ENCODE measurements at regions of chr1 and their contacts with region 1.

Region 1: GRCh38 chr1:205335643-205336091 is 14.1 kb upstream of the NUAK2 start:
- DNase-seq: no peak
- H3K4me3 ChIP-seq: no peak overlapping the region
- H3K27ac ChIP-seq: no peak overlapping the region
- H3K27me3 ChIP-seq: peaks cover 41% of the 10 kb centered on the region
- CTCF ChIP-seq: peak; percentile 98

Region 2: DNA sequence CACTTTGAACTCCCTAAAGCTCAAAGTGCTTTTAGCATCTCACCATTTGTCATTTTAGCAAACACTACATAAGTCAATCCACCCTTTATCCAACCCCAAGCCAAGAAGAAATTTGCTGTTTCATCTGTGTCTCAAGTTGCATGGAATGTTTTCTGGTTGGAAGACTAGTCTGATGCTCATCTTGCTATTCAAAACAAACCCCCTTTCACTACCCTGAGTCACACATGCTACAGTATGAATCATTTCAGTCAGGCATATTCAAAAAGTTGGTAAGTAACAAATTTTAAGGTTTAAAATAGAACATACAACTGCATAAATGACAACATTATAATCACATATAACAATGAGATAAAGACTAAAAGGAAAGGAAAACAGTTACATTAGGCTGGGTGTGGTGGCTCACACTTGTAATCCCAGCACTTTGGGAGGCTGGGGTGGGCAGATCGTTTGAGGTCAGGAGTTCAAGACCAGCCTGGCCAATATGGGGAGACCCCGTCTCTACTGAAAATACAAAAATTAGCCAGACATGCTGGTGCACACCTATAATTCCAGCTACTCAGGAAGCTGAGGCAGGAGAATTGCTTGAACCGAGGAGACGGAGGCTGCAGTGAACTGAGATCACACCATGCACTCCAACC is 162.8 kb before region 1 on chr1:
- CTCF ChIA-PET with region 1: no interaction called
- POLR2A ChIA-PET with region 1: no interaction called
- DNase-seq: peak; percentile 89
- H3K4me3 ChIP-seq: no peak overlapping the region
- H3K27ac ChIP-seq: peak overlapping the region; percentile 79
- H3K27me3 ChIP-seq: no peaks in the 10 kb centered on the region
- CTCF ChIP-seq: no peak

Region 3: DNA sequence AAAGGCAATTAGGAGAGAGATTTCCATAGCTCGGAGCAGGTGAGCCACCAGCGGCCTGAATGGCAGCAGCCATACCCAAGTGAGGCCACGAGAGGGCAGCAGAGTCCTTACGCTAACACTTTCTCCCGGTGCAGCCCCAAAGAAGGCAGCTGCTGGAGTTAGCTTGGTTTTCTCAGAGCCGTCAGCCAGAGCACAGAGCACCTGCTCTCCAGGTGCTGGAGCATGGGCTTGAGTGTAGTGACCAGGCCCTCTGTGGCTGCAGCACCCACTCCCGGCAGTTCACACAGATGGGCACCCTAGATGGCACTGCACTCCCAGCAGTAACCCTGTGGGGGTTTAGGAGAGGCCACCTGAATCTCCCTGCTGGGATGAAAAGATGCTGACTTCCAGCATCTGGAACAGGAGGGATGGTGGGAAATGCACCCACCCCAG is 62.1 kb before region 1 on chr1:
- CTCF ChIA-PET with region 1: interaction called, 35 read pairs
- POLR2A ChIA-PET with region 1: no interaction called
- DNase-seq: no peak
- H3K4me3 ChIP-seq: no peak overlapping the region
- H3K27ac ChIP-seq: no peak overlapping the region
- H3K27me3 ChIP-seq: no peaks in the 10 kb centered on the region
- CTCF ChIP-seq: peak; percentile 97

Region 4: DNA sequence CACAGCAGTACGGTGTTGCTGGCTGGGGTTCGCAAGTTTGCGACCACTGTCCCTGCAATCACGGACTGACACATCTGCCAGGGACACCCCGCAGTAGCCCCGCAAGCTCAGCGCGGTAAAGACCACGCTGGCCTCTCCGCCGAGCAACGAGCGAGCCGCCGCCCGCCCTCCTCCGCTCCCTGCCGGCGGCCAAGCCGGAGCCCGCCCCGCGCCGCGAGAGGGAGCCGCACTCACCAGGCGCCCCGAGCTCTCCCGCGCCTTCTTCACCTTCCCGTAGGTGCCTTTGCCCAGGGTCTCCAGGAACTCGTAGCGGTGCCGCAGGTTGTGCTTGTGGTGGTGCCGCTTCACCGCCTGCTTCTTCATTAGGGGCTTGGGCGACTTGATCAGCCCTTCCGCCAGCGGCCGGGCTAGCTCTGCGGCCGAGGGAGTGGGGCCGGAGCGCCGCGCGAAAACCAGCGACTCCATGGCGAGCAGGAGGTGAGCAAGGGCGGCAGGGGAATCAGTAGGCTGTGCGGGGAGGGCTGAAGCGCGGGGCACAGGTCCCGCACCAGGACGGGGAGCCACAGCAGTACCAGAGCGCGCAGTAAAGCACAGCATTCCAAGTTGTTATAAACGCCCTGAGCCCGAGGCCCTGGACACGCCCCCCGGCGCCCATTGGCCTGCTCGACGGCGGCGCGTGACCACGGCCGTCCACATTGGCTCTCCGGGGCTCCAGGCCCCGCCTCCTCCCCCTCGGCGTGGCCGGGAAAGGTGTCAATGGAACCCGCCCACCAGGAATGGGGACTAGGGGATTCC is 14.3 kb before region 1 on chr1 and contains the start of gene NUAK2:
- CTCF ChIA-PET with region 1: interaction called, 59 read pairs
- POLR2A ChIA-PET with region 1: no interaction called
- DNase-seq: peak; percentile 61
- H3K4me3 ChIP-seq: peak within 1 kb of the TSS; percentile 93
- H3K27ac ChIP-seq: peak within 1 kb of the TSS; percentile 80
- H3K27me3 ChIP-seq: peaks cover 4% of the 10 kb centered on the region
- CTCF ChIP-seq: peak; percentile 41
- polyA plus RNA-seq, gene NUAK2: 7.0 and 8.2 TPM in 2 replicates

Region 5: GRCh38 chr1:205348881-205349477 is 13.3 kb after region 1 on chr1:
- CTCF ChIA-PET with region 1: interaction called, 54 read pairs
- POLR2A ChIA-PET with region 1: no interaction called
- DNase-seq: no peak
- H3K4me3 ChIP-seq: no peak overlapping the region
- H3K27ac ChIP-seq: no peak overlapping the region
- H3K27me3 ChIP-seq: peaks cover 51% of the 10 kb centered on the region
- CTCF ChIP-seq: no peak

Region 6: DNA sequence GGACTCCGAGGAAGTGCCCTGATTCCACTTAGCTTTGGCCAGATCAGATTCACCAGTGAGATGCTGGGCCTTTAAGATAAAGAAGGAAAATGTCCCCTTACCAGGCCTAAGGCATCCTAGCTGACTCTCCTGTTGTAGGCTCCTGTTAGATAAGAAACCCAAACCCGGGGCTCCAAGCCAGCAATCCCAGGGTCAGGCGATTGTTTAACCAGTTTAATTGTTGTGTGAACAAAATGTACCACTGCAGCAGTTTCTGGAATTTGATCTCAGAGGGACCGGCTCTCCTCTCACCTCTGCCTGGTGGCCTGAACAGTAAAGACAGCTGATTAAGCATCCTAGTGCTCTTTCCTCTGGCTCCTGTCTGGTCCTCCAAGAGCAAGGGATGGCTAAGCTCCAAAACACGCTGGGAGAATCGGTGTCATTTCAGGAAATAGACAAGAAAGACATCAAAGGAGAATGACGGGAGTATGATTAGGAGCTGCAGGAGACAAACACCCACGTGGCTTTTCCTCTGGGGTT is 30.3 kb after region 1 on chr1:
- CTCF ChIA-PET with region 1: interaction called, 14 read pairs
- POLR2A ChIA-PET with region 1: no interaction called
- DNase-seq: no peak
- H3K4me3 ChIP-seq: no peak overlapping the region
- H3K27ac ChIP-seq: no peak overlapping the region
- H3K27me3 ChIP-seq: peaks cover 4% of the 10 kb centered on the region
- CTCF ChIP-seq: no peak

Region 7: GRCh38 chr1:205396967-205397616 is 61.4 kb after region 1 on chr1:
- CTCF ChIA-PET with region 1: interaction called, 14 read pairs
- POLR2A ChIA-PET with region 1: no interaction called
- DNase-seq: no peak
- H3K4me3 ChIP-seq: no peak overlapping the region
- H3K27ac ChIP-seq: no peak overlapping the region
- H3K27me3 ChIP-seq: peaks cover 9% of the 10 kb centered on the region
- CTCF ChIP-seq: peak; percentile 70

Region 8: GRCh38 chr1:205430696-205431305 is 95.1 kb after region 1 on chr1:
- CTCF ChIA-PET with region 1: interaction called, 12 read pairs
- POLR2A ChIA-PET with region 1: no interaction called
- DNase-seq: no peak
- H3K4me3 ChIP-seq: peak overlapping the region; percentile 66
- H3K27ac ChIP-seq: no peak overlapping the region
- H3K27me3 ChIP-seq: peaks cover 39% of the 10 kb centered on the region
- CTCF ChIP-seq: peak; percentile 98

Region 9: GRCh38 chr1:205554026-205554811 is 218.6 kb after region 1 on chr1:
- CTCF ChIA-PET with region 1: no interaction called
- POLR2A ChIA-PET with region 1: no interaction called
- DNase-seq: no peak
- H3K4me3 ChIP-seq: no peak overlapping the region
- H3K27ac ChIP-seq: no peak overlapping the region
- H3K27me3 ChIP-seq: peaks cover 12% of the 10 kb centered on the region
- CTCF ChIP-seq: no peak

Region 10: GRCh38 chr1:205693421-205693991 is 357.8 kb after region 1 on chr1:
- CTCF ChIA-PET with region 1: no interaction called
- POLR2A ChIA-PET with region 1: no interaction called
- DNase-seq: no peak
- H3K4me3 ChIP-seq: no peak overlapping the region
- H3K27ac ChIP-seq: no peak overlapping the region
- H3K27me3 ChIP-seq: peaks cover 3% of the 10 kb centered on the region
- CTCF ChIP-seq: no peak